Activated CD4-positive, alpha-beta memory T cell treated with anti-CD3 and anti-CD28 coated beads for 36 hours (primary cell): ENCODE measurements at regions of chr1 and their contacts with region 1.

Region 1: DNA sequence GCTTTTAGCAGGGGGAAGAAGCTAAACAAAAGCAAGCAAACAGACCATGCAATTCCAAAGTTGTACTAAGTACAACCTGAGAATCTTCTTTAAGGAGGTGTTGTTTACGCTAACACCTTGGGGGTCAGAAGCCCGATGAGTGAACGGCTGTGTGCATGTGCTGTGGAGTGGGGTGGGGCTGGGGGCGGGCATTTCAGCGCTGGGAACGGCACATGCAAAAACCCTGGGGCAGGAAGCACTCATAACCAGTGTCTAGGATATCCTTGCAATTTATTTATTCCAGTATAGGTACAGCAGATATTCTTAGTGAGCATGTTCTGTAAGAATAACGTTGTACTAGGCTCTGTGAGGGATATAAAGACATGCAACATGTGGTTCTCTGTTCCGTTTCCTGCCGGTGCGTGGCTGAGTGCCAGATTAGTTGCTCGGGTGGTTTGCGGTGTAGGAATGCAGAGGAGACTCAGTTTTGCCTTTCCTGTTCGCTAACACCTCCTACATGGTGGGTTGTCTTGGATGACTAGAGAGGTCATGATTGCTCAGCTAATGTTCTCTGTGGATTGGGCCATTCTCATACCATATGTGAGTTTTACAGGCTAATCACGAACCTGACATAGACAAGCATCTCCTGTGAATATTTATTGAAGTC is 3.7 kb downstream of the FASLG start:
- DNase-seq: peak; percentile 97
- H3K4me3 Mint-ChIP-seq: peak overlapping the region; percentile 78
- H3K27ac Mint-ChIP-seq: peak overlapping the region; percentile 91
- H3K4me1 Mint-ChIP-seq: peaks cover 81% of the 10 kb centered on the region
- H3K27me3 Mint-ChIP-seq: peaks cover 10% of the 10 kb centered on the region

Region 2: DNA sequence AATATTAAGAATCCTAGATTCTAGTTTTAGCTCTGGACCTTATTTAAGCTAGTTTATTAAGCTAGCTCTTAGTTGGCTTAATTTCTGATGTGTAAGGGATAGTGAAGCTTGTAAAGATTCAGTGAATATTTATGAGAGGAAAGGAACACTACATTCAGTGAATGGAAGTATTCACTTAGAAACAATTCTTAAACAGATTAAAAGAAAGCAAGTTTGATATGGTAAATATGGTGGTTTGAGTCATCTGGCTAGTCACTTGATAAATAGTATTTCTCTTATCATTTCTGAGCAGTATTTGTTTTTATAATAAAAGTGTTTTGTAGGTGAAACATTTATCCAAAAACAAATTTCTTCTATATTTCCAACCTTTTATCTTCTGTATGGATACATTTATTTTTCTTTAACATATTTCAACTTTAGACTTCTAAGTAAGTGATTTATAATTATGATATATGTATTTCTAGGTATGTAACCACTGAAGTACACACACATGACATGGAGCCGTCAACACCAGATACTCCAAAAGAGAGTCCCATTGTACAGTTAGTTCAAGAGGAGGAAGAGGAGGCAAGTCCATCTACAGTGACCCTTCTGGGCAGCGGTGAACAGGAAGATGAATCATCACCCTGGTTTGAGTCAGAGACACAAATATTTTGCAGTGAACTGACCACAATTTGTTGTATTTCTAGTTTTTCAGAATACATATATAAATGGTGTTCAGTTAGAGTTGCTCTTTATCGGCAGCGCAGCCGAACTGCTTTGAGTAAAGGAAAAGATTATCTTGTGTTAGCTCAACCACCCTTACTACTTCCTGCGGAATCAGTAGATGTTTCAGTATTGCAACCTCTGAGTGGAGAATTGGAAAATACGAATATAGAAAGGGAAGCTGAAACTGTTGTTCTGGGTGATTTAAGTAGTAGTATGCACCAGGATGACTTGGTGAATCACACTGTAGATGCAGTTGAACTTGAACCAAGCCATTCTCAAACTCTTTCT is 74.0 kb before region 1 on chr1:
- CTCF ChIA-PET with region 1: interaction called, 5 read pairs
- POLR2A ChIA-PET with region 1: no interaction called
- intact Hi-C with region 1: loop called (anchors 1 kb)
- DNase-seq: peak; percentile 43
- H3K4me3 Mint-ChIP-seq: no peak overlapping the region
- H3K27ac Mint-ChIP-seq: peak overlapping the region; percentile 49
- H3K4me1 Mint-ChIP-seq: peaks cover 28% of the 10 kb centered on the region
- H3K27me3 Mint-ChIP-seq: no peaks in the 10 kb centered on the region

Region 3: DNA sequence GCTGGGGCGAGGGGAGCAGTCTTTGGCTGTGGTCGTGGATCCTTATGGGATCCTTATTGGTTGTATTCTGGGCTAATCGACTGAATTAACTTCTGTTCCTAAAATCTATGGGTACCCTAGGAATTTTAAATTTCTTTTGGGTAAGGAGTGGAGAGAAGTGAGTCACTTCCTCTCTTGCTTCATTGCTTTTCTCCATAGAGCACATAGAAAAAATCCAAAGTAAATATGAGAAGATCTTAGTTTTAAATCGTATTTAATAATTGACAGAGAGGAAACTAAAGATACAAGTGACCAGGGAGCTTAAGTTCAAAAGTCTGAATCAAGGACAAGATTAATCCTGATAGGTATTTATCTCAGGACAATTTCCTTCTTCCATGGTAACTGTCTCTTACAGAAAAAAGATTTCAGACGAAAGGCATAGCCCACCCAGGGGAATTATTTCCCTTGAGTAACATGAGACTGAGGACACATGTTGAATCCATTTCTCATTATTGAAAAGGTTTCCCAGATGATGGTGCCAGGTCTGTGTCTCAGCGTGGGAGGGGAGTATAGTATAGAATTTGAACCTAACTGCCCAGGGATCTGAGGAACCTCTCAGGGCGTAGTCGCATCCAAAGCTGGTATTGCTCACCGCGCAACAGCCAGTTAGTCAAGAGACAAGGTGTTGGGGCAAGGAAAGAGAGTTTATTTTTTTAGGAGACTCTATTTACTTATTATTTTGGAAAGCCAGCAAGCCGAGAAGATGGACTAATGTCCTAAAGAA is 32.4 kb before region 1 on chr1:
- CTCF ChIA-PET with region 1: no interaction called
- POLR2A ChIA-PET with region 1: no interaction called
- intact Hi-C with region 1: loop called (anchors 5 kb)
- DNase-seq: no peak
- H3K4me3 Mint-ChIP-seq: no peak overlapping the region
- H3K27ac Mint-ChIP-seq: no peak overlapping the region
- H3K4me1 Mint-ChIP-seq: peaks cover 49% of the 10 kb centered on the region
- H3K27me3 Mint-ChIP-seq: peaks cover 8% of the 10 kb centered on the region

Region 4: GRCh38 chr1:172699111-172699510 is 36.5 kb after region 1 on chr1:
- CTCF ChIA-PET with region 1: interaction called, 5 read pairs
- POLR2A ChIA-PET with region 1: interaction called, 8 read pairs
- intact Hi-C with region 1: loop called (anchors 1 kb)
- DNase-seq: peak; percentile 86
- H3K4me3 Mint-ChIP-seq: peak overlapping the region; percentile 14
- H3K27ac Mint-ChIP-seq: peak overlapping the region; percentile 88
- H3K4me1 Mint-ChIP-seq: peaks cover 50% of the 10 kb centered on the region
- H3K27me3 Mint-ChIP-seq: no peaks in the 10 kb centered on the region

Region 5: GRCh38 chr1:172990598-172991215 is 328.1 kb after region 1 on chr1:
- CTCF ChIA-PET with region 1: no interaction called
- POLR2A ChIA-PET with region 1: no interaction called
- intact Hi-C with region 1: no loop called
- DNase-seq: no peak
- H3K4me3 Mint-ChIP-seq: no peak overlapping the region
- H3K27ac Mint-ChIP-seq: no peak overlapping the region
- H3K4me1 Mint-ChIP-seq: no peaks in the 10 kb centered on the region
- H3K27me3 Mint-ChIP-seq: no peaks in the 10 kb centered on the region